GM10248 (cell line): ENCODE measurements at regions of chr11 and their contacts with region 1.

Region 1: DNA sequence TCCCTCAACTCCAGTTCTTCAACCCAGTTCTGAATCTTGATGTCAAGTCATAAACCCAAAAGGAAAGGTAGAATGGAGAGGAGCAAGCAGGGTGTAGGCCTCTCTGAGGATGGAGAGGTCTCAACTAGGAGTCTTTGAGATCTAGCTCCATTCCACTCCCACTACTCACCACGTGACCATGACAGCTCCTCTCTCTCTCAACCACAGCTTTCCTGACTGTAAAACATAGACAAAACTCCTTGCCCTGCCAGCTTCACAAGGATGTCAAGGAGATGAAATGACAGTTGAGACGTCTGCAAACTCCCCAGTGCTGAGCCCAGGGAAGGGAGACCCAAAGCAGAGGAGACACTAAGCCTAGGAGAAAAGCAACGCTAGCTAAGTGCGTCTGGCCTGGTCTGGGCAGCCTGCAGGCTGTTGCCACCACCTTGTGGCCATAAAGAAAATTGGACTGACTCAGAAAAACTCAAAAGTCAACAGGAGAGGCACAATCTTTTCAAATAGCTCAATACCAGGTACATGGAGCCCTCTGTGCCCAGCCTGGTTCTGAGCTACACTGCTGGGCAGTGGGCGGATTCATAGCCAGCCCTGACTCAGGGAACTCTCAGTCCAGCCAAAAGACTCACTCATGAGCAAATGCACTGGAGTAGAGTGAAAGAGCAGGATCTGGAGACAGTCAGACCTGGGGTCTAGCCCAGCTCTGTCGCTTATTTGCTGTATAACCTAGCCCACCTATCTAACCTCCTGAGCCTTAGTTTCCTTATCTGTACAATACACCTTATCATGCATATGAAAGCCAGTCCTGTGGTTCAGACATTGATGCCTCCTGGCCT is 3.4 kb downstream of the CLPB start:
- DNase-seq: peak; percentile 72
- CTCF ChIP-seq: peak; percentile 74

Region 2: GRCh38 chr11:71977743-71978418 is 453.1 kb before region 1 on chr11:
- CTCF ChIA-PET with region 1: interaction called, 15 read pairs
- POLR2A ChIA-PET with region 1: no interaction called
- DNase-seq: peak; percentile 59
- CTCF ChIP-seq: peak; percentile 73

Region 3: GRCh38 chr11:72091005-72091691 is 339.8 kb before region 1 on chr11:
- CTCF ChIA-PET with region 1: interaction called, 11 read pairs
- POLR2A ChIA-PET with region 1: interaction called, 4 read pairs
- DNase-seq: peak; percentile 78
- CTCF ChIP-seq: peak; percentile 79

Region 4: GRCh38 chr11:72222907-72223614 is 207.9 kb before region 1 on chr11:
- CTCF ChIA-PET with region 1: interaction called, 10 read pairs
- POLR2A ChIA-PET with region 1: no interaction called
- DNase-seq: peak; percentile 93
- CTCF ChIP-seq: no peak

Region 5: DNA sequence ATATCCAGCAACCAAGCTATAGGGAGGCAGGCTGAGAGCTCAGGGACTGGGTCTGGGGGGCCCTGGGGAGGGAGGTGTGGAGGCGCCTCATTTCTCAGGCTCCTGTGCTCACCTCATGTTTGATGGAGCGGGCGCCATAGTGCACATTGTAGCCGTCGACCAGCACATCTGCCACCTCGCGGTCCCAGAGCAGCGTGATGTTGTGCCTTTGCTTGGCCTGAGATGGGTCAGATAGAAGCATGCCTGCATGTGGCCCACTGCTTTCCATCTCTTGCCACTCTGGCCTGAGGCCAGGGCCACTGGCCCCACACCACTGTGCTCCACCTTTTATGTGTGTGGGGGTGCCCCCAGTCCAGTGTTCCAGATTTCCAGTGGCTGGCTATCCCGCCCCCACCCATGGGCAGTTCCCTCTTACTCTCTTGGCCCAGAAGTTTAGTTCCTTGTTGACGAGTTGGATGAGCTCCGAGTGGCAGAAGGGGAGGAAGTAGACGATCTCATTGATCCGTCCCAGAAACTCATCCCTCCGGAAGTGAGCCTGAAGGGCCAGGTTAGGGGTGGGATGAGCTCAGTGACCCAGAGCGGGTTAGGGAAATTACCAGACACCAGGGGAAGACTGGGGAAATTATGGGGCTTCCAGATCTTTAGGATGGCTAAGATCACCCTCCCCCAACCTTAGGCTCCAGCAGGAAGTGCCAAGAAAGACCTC is 136.9 kb before region 1 on chr11:
- CTCF ChIA-PET with region 1: interaction called, 60 read pairs
- POLR2A ChIA-PET with region 1: no interaction called
- DNase-seq: no peak
- CTCF ChIP-seq: no peak

Region 6: GRCh38 chr11:72413914-72414628 is 16.9 kb before region 1 on chr11:
- CTCF ChIA-PET with region 1: interaction called, 221 read pairs
- POLR2A ChIA-PET with region 1: no interaction called
- DNase-seq: peak; percentile 83
- CTCF ChIP-seq: peak; percentile 82

Region 7: DNA sequence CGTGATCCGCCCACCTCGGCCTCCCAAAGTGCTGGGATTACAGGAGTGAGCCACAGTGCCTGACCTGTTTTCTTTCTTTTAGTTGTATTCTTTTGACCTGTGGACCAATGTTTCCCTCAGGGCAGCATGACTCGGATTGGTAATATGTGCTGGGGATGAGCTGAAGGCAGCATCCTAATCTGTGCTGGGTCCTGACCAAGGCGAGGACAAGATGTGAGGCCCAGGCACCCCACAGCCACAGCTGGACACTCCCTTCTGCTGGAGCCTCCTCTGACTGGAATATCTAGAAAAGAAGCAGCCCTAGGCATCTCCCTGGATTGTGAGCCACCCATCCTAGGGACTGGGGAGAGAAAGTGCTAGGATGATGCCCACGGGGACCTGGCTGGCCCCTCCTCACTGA is 137.9 kb after region 1 on chr11:
- CTCF ChIA-PET with region 1: no interaction called
- POLR2A ChIA-PET with region 1: no interaction called
- DNase-seq: no peak
- CTCF ChIP-seq: no peak

Region 8: DNA sequence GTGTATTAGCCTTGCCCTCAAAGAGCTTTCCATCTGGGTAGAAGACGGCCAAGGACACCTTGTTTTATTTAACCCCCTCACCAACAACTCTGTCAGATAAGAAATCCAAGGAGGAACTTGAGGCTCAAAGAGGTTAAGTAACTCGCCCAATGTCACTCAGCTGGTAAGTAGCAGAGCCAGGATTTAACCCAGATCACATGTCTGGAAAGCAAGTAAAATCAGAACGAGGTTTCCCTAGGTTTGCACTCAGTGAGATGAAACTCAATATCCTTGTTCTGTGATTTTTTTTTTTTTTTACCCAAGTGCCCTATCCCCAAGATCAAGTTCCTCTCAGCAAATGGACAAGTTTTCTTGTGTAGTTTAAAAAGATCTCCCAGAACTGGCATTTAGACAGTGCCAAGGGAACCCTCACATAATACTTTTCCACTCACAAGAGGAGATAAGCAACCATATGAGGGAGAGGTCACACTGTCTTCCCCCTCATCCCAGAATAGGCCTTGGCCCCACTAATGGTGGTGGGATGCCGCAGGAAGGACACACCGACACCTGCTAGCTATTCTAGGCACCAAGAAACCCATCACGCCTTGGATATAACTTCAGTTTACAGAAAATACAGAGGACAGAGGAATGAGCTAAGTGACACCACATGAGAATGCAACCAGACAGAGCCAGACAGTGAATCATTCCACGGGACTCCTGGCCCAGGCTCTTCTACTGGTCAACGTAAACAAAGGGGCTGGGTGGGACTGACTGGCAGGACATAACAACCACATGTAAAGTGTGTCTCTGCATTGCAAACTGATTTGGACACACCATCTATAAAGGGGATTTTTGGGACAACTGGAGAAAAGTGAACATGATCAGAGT is 329.8 kb after region 1 on chr11:
- CTCF ChIA-PET with region 1: no interaction called
- POLR2A ChIA-PET with region 1: no interaction called
- DNase-seq: no peak
- CTCF ChIP-seq: no peak